ENCODE measurements at regions of chr4 and their contacts with region 1.

Region 1: GRCh38 chr4:986879-987623 is at the start of gene IDUA:
- DNase-seq: peak; percentile 77 to 92
- ATAC-seq: peak; percentile 86 to 91 (median 86)
- H3K4me3 ChIP-seq: peak within 1 kb of the TSS; percentile 73
- H3K4me3 Mint-ChIP-seq: peak within 1 kb of the TSS; percentile 93
- H3K27ac ChIP-seq: peak within 1 kb of the TSS; percentile 70
- H3K27ac Mint-ChIP-seq: peak within 1 kb of the TSS; percentile 80 to 81
- H3K4me1 ChIP-seq: peaks cover 30% of the 10 kb centered on the region
- H3K4me1 Mint-ChIP-seq: peaks cover 23 to 29% of the 10 kb centered on the region in 2 donors
- H3K27me3 ChIP-seq: no peaks in the 10 kb centered on the region
- H3K27me3 Mint-ChIP-seq: no peaks in the 10 kb centered on the region
- CTCF ChIP-seq: peak; percentile 68
- total RNA-seq, gene IDUA: 38.7 to 43.6 (median 43.0) TPM

Region 2: DNA sequence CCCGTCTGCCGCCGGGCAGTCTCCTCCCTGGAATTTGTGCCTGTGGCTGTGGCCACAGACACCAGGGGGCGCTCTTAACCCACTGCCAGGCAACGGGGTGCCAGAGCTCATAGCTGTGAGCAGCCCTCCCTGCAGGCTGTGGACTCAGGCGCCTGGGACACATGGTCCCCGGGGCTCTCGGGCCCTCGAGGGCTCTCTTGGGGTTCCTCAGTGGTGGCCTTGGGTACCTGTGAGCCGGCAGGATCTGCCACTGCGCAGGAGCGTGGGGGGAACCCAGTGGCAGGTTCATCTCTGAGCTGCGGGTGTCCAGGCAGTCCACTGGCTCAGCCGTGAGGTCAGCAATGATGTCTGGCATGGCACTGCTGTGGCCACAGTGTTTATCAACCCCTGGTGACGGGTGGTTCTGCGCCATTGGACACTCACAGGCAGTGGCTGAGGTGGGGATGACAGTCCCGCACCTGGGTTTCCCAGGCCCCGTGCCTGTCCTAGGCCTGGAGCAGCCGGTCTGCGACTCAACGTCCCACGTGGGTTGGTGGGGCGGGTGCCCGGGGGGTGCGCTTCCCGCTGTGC is 244.2 kb before region 1 on chr4:
- intact Hi-C with region 1: loop called (anchors 2 kb)
- DNase-seq: peak; percentile 55 to 85
- ATAC-seq: peak; percentile 77 to 89 (median 86)
- H3K4me3 ChIP-seq: no peak overlapping the region
- H3K4me3 Mint-ChIP-seq: no peak overlapping the region
- H3K27ac ChIP-seq: no peak overlapping the region
- H3K27ac Mint-ChIP-seq: peak overlapping the region; percentile 43 to 47
- H3K4me1 ChIP-seq: no peaks in the 10 kb centered on the region
- H3K4me1 Mint-ChIP-seq: peaks cover 7 to 15% of the 10 kb centered on the region in 2 donors
- H3K27me3 ChIP-seq: no peaks in the 10 kb centered on the region
- H3K27me3 Mint-ChIP-seq: no peaks in the 10 kb centered on the region
- CTCF ChIP-seq: peak; percentile 74

Region 3: DNA sequence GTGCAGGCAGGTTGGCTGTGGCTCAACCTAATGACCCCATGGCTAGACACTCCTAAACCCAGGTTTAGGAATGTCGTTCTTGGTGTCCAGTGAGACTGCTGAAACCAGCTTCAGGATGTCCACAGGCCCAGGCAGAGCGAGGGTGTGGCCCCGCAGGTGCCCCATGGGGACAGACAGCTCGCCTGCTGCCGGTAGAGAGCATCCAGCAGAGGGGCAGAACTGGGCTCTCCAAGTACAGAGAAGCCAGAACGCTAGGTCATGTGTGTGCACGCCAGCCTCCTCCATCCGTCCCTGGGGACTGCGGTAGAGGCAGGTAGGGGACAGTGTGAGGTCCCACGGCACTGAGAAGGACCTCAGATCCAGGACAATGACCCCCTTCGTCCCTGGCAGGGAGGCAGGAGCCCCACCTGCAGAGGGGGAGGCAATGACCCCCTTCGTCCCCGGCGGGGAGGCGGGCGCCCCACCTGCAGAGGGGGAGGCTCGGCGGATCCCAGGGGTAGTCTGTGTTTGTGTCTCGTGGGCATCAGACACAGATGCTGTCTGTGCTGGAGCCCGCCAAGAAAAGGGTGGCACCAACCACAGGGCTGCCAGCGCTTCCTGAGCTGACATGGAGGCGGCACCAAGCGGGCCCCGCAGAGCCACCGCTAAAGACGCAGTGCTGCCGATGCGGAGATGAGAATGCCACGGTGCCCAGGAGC is 578.7 kb after region 1 on chr4:
- intact Hi-C with region 1: no loop called
- DNase-seq: no peak
- ATAC-seq: peak in 1 of 3 donors; percentile 36
- H3K4me3 ChIP-seq: no peak overlapping the region
- H3K4me3 Mint-ChIP-seq: peak overlapping the region; percentile 58
- H3K27ac ChIP-seq: no peak overlapping the region
- H3K27ac Mint-ChIP-seq: no peak overlapping the region
- H3K4me1 ChIP-seq: peaks cover 3% of the 10 kb centered on the region
- H3K4me1 Mint-ChIP-seq: no peaks in the 10 kb centered on the region
- H3K27me3 ChIP-seq: peaks cover 5% of the 10 kb centered on the region
- H3K27me3 Mint-ChIP-seq: peaks cover 0 to 2% of the 10 kb centered on the region in 2 donors
- CTCF ChIP-seq: no peak

Measured in natural killer cell (primary cell).